Activated CD4-positive, alpha-beta T cell treated with anti-CD3 and anti-CD28 coated beads for 36 hours (primary cell): ENCODE measurements at regions of chr5 and their contacts with region 1.

Region 1: DNA sequence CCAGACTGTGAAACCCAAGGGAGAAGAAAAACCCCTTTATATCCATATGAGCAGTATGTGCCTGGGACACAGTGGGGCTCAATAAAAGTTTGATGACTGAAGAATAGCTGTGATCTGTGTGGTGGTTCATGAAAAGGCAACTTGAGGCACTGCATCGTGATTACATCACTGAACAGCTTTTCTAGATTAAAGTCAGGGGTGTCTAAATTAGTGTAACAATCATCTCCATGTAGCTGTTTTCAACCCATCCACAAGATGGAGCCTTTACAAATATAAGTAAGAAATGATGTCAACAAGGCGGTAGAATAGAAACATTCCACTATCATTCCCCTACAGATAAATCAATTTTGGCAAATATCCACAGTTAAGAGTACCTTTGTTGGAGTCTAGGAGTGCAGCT is 55.5 kb downstream of the PRRC1 start:
- DNase-seq: no peak
- ATAC-seq: peak; percentile 47
- H3K4me3 Mint-ChIP-seq: no peak overlapping the region
- H3K27ac Mint-ChIP-seq: no peak overlapping the region
- H3K4me1 Mint-ChIP-seq: peaks cover 6% of the 10 kb centered on the region
- H3K27me3 Mint-ChIP-seq: peaks cover 21% of the 10 kb centered on the region

Region 2: GRCh38 chr5:127275745-127276144 is 297.2 kb before region 1 on chr5:
- CTCF ChIA-PET with region 1: no interaction called
- POLR2A ChIA-PET with region 1: no interaction called
- intact Hi-C with region 1: no loop called
- DNase-seq: no peak
- ATAC-seq: peak; percentile 30
- H3K4me3 Mint-ChIP-seq: no peak overlapping the region
- H3K27ac Mint-ChIP-seq: no peak overlapping the region
- H3K4me1 Mint-ChIP-seq: no peaks in the 10 kb centered on the region
- H3K27me3 Mint-ChIP-seq: peaks cover 8% of the 10 kb centered on the region

Region 3: GRCh38 chr5:127615916-127616315 is 43.0 kb after region 1 on chr5:
- CTCF ChIA-PET with region 1: no interaction called
- POLR2A ChIA-PET with region 1: no interaction called
- intact Hi-C with region 1: no loop called
- DNase-seq: no peak
- ATAC-seq: no peak
- H3K4me3 Mint-ChIP-seq: no peak overlapping the region
- H3K27ac Mint-ChIP-seq: no peak overlapping the region
- H3K4me1 Mint-ChIP-seq: no peaks in the 10 kb centered on the region
- H3K27me3 Mint-ChIP-seq: peaks cover 2% of the 10 kb centered on the region

Region 4: DNA sequence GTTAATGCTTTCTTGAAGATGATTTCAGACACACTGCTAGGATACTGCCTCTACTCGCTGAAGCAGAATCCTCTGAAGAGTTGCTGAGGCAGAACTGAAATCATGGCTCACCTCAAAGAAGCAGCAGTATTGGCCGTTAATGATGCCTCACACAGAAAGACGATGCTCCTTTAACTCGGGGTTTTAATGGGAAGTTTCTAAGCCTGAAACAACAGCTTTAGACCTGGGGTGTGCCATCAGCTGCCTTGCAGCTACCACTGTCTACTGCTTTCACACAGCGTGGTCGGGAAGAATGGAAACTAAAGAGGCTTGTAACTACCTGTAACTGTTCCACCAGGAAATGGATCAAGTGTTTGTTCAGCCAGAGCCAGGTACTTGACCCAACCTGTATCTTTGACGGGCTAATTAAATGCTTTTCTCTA is 76.1 kb after region 1 on chr5 and contains the start of gene CTXN3:
- CTCF ChIA-PET with region 1: no interaction called
- POLR2A ChIA-PET with region 1: no interaction called
- intact Hi-C with region 1: loop called in 1 of 2 experiments (anchors 5 kb)
- DNase-seq: no peak
- ATAC-seq: no peak
- H3K4me3 Mint-ChIP-seq: no peak within 1 kb of the TSS
- H3K27ac Mint-ChIP-seq: no peak within 1 kb of the TSS
- H3K4me1 Mint-ChIP-seq: no peaks in the 10 kb centered on the region
- H3K27me3 Mint-ChIP-seq: no peaks in the 10 kb centered on the region
- total RNA-seq, gene CTXN3: not detected

Region 5: GRCh38 chr5:128328446-128328845 is 755.5 kb after region 1 on chr5:
- CTCF ChIA-PET with region 1: no interaction called
- POLR2A ChIA-PET with region 1: no interaction called
- intact Hi-C with region 1: no loop called
- DNase-seq: no peak
- ATAC-seq: no peak
- H3K4me3 Mint-ChIP-seq: no peak overlapping the region
- H3K27ac Mint-ChIP-seq: no peak overlapping the region
- H3K4me1 Mint-ChIP-seq: no peaks in the 10 kb centered on the region
- H3K27me3 Mint-ChIP-seq: peaks cover 13% of the 10 kb centered on the region